Dorsolateral prefrontal cortex (tissue), 120 donors: ENCODE measurements at regions of chr2 and their contacts with region 1.

Region 1: GRCh38 chr2:231604685-231605606 is 12.3 kb downstream of the TEX44 start:
- DNase-seq: peak; percentile 99 to 100 (median 100)
- H3K4me3 ChIP-seq: peak overlapping the region; percentile 8 to 71 (median 59)
- H3K27ac ChIP-seq: peak overlapping the region; percentile 96 to 100 (median 100)
- H3K27me3 ChIP-seq: no peaks in the 10 kb centered on the region
- CTCF ChIP-seq: peak in 49 of 56 donors; percentile 16 to 72 (median 45)

Region 2: DNA sequence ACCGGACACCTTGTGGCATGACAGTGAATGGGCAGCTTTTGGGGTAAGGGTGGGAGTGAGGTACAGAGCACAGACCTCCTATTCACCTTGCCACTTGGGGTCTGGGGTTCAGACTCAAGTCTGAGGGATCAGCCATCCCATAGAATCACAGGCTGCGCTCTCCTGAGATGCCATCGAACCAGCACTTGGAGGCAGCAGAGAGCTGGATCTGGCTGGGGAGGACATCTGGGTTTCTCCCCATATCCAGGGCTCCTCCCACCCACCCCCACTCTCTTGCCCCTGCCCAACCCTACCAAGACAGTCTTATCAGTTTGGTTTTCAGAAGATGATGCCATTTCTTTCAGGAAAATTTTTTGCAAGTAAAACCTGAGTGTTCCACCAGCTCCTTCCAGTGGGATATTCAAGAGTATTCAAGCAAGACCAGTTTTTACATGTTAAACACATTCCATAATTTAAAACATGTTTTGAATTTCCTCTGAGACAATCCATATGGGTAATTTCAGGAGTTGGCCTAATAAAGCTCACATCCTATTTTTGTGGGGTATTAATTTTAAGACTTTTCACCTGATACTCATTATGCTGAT is 41.5 kb before region 1 on chr2:
- intact Hi-C with region 1: loop called (anchors 2 kb)
- DNase-seq: peak; percentile 41 to 79 (median 70)
- H3K4me3 ChIP-seq: no peak overlapping the region
- H3K27ac ChIP-seq: peak overlapping the region in 18 of 59 donors; percentile 2 to 70 (median 42)
- H3K27me3 ChIP-seq: no peaks in the 10 kb centered on the region
- CTCF ChIP-seq: peak; percentile 49 to 92 (median 81)

Region 3: DNA sequence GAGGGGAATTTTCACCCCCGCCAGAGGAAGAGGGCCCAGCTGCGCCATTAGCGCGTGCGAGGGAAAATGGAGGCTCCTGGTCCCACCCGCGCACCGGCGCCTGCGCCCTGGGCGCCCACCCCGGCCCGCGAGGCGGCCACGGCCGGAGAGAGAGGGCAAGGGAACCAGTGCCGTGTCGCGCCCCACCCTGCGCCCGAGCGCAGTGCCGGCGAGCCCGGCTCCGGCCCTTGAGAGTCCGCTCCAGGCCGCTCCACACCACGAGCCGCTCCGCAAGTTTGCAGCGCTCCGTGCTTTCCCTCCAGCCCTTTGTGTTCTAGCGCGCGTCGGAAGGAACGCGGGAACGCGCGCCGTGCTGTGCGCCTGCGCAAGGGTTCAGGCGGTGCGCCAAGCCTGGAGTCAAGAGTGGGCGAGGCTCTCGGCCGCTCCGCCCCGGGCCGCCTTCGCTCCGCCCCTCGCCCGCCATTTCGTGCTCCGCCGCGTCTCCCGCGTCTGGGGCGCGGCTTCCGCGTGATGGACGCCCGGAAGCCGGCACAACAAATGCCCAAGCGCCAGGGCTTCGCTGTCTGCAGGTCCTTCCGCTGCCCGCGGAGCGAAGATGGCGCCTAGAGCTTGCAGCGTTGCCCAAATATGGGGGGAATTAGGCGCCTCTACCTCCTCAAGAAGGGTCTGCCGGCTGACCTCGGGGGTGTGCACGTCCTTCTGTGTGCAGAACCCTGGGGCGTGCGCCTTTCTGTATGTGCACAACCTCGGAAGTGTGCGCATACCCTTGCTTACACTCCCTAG is 57.3 kb after region 1 on chr2:
- intact Hi-C with region 1: loop called in 1 of 2 experiments (anchors 2 kb)
- DNase-seq: peak; percentile 85 to 96 (median 94)
- H3K4me3 ChIP-seq: peak overlapping the region; percentile 13 to 84 (median 61)
- H3K27ac ChIP-seq: peak overlapping the region; percentile 92 to 100 (median 99)
- H3K27me3 ChIP-seq: no peaks in the 10 kb centered on the region
- CTCF ChIP-seq: peak in 37 of 56 donors; percentile 8 to 63 (median 35)